ENCODE measurements at regions of chr10 and their contacts with region 1.

Region 1: GRCh38 chr10:25016376-25017154 is at the start of gene THNSL1:
- DNase-seq: peak; percentile 97
- H3K4me3 Mint-ChIP-seq: peak within 1 kb of the TSS; percentile 89
- H3K27ac Mint-ChIP-seq: peak within 1 kb of the TSS; percentile 95
- H3K4me1 Mint-ChIP-seq: peaks cover 14% of the 10 kb centered on the region
- H3K27me3 Mint-ChIP-seq: peaks cover 4% of the 10 kb centered on the region
- total RNA-seq, gene THNSL1: 3.1 TPM in 2 replicates

Region 2: GRCh38 chr10:24642622-24643417 is 373.7 kb before region 1 on chr10:
- intact Hi-C with region 1: loop called (anchors 5 kb)
- DNase-seq: no peak
- H3K4me3 Mint-ChIP-seq: no peak overlapping the region
- H3K27ac Mint-ChIP-seq: no peak overlapping the region
- H3K4me1 Mint-ChIP-seq: peaks cover 6% of the 10 kb centered on the region
- H3K27me3 Mint-ChIP-seq: no peaks in the 10 kb centered on the region

Region 3: DNA sequence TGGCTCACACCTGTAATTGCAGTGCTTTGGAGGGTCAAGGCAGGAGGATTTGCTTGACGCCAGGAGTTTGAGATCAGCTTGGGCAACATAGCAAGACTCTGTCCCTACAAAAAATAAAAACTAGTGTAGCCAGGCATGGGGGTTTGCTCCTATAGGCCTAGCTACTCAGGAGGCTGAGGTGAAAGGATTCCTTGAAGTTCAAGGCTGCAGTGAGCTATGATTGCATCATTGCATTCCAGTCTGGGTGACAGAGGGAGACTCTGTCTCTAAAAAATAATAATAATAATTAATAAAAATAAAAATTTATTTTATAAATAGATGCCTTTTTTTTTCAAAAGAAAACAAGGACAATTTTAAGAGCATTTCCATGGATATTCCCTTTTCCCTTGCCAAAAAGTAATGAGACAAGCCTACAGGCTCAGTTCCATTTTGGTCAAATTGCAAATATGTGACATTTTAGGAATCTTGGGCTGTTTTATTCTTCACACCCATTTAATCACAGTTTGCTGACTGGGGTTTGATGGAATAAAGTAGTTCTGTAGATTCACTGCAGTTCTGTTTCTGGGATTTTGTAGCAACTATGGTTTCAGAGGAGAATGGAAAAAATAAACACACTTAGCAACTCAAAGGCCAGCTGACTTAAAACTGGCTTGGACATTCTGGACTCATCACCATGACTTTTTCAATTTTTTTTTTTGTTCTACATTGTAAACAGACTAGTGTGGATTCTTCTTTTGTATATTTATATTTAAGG is 244.4 kb before region 1 on chr10:
- intact Hi-C with region 1: no loop called
- DNase-seq: no peak
- H3K4me3 Mint-ChIP-seq: no peak overlapping the region
- H3K27ac Mint-ChIP-seq: no peak overlapping the region
- H3K4me1 Mint-ChIP-seq: peaks cover 3% of the 10 kb centered on the region
- H3K27me3 Mint-ChIP-seq: peaks cover 7% of the 10 kb centered on the region

Region 4: GRCh38 chr10:24882047-24882698 is 134.4 kb before region 1 on chr10:
- intact Hi-C with region 1: loop called (anchors 10 kb)
- DNase-seq: peak; percentile 12
- H3K4me3 Mint-ChIP-seq: no peak overlapping the region
- H3K27ac Mint-ChIP-seq: no peak overlapping the region
- H3K4me1 Mint-ChIP-seq: peaks cover 12% of the 10 kb centered on the region
- H3K27me3 Mint-ChIP-seq: no peaks in the 10 kb centered on the region

Region 5: GRCh38 chr10:24920907-24921881 is 95.4 kb before region 1 on chr10:
- intact Hi-C with region 1: loop called (anchors 1 kb)
- DNase-seq: peak; percentile 25
- H3K4me3 Mint-ChIP-seq: no peak overlapping the region
- H3K27ac Mint-ChIP-seq: peak overlapping the region; percentile 85
- H3K4me1 Mint-ChIP-seq: peaks cover 25% of the 10 kb centered on the region
- H3K27me3 Mint-ChIP-seq: no peaks in the 10 kb centered on the region

Region 6: GRCh38 chr10:25059764-25060389 is 43.3 kb after region 1 on chr10:
- intact Hi-C with region 1: loop called (anchors 1 kb)
- DNase-seq: no peak
- H3K4me3 Mint-ChIP-seq: no peak overlapping the region
- H3K27ac Mint-ChIP-seq: no peak overlapping the region
- H3K4me1 Mint-ChIP-seq: peaks cover 18% of the 10 kb centered on the region
- H3K27me3 Mint-ChIP-seq: no peaks in the 10 kb centered on the region